ENCODE measurements at regions of chr17 and their contacts with region 1.

Region 1: DNA sequence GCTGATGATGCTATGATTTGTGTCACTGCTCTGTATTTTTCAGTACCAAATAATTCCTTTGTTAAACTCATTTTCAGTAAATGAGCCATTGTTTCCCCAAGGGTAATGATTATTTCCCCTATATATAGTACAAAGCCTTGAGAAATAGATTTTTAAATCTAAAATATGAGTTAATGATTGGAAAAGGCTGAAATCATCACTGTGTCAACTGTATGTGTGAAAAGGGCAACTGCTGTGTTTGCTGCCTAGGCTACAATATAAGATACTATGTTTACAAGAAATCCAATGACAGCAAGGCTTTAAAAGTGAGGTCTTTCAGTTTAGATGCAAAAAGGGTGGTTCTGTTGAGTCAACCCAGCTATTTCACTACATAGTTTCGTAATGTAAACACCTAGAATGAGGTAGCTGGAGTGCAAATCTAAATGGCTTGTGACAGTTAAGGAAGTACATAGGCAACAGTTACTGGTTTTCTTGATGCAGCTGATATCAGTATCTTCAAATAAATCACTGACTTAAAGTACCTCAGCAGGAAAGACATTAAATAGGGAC is 15.3 kb downstream of the NLK start:
- DNase-seq: no peak
- H3K4me3 Mint-ChIP-seq: no peak overlapping the region
- H3K27ac Mint-ChIP-seq: peak overlapping the region; percentile 54
- H3K4me1 Mint-ChIP-seq: peaks cover 36% of the 10 kb centered on the region
- H3K27me3 Mint-ChIP-seq: no peaks in the 10 kb centered on the region
- CTCF ChIP-seq: no peak

Region 2: DNA sequence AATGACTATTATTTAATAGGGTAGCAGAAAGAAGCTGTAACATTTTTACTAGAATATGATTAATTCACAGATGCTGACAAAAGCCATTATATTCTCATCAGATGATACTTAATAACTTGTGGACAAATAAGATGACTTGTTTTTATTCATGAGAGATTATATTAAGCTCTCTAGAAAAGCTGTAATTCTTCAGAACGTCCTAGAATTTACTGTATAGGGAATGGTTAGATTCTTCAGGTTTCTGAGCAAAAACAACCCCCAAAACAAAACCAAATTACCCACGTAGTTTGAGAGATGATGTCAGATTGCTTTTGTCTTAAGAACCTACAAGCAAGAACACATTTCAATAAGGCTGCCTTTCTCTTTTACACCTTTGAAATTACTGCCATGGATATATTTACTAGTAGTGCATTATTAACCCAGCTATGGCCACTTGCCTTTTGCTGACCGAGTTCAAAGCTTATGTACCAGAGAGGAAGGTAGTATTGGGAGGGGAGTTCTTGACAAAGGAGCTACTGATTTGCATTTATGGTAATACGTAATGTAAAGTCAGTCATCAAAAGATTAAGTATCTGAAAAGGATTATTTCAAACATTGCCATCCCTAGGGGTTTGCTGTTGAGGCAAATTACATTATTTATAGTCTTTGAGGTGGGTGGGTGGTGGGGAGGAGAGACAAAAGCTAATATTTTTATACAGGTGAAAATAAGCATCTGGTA is 36.4 kb after region 1 on chr17:
- CTCF ChIA-PET with region 1: no interaction called
- intact Hi-C with region 1: no loop called
- DNase-seq: no peak
- H3K4me3 Mint-ChIP-seq: no peak overlapping the region
- H3K27ac Mint-ChIP-seq: no peak overlapping the region
- H3K4me1 Mint-ChIP-seq: peaks cover 6% of the 10 kb centered on the region
- H3K27me3 Mint-ChIP-seq: no peaks in the 10 kb centered on the region
- CTCF ChIP-seq: no peak

Region 3: GRCh38 chr17:28105501-28105900 is 47.7 kb after region 1 on chr17:
- CTCF ChIA-PET with region 1: no interaction called
- intact Hi-C with region 1: loop called (anchors 5 kb)
- DNase-seq: no peak
- H3K4me3 Mint-ChIP-seq: no peak overlapping the region
- H3K27ac Mint-ChIP-seq: no peak overlapping the region
- H3K4me1 Mint-ChIP-seq: peaks cover 4% of the 10 kb centered on the region
- H3K27me3 Mint-ChIP-seq: no peaks in the 10 kb centered on the region
- CTCF ChIP-seq: no peak

Region 4: GRCh38 chr17:28125530-28126378 is 67.9 kb after region 1 on chr17:
- CTCF ChIA-PET with region 1: interaction called, 3 read pairs
- intact Hi-C with region 1: loop called (anchors 5 kb)
- DNase-seq: no peak
- H3K4me3 Mint-ChIP-seq: no peak overlapping the region
- H3K27ac Mint-ChIP-seq: peak overlapping the region; percentile 57
- H3K4me1 Mint-ChIP-seq: peaks cover 35% of the 10 kb centered on the region
- H3K27me3 Mint-ChIP-seq: no peaks in the 10 kb centered on the region
- CTCF ChIP-seq: no peak

Region 5: GRCh38 chr17:28136923-28137322 is 79.1 kb after region 1 on chr17:
- CTCF ChIA-PET with region 1: no interaction called
- intact Hi-C with region 1: no loop called
- DNase-seq: no peak
- H3K4me3 Mint-ChIP-seq: no peak overlapping the region
- H3K27ac Mint-ChIP-seq: no peak overlapping the region
- H3K4me1 Mint-ChIP-seq: peaks cover 11% of the 10 kb centered on the region
- H3K27me3 Mint-ChIP-seq: no peaks in the 10 kb centered on the region
- CTCF ChIP-seq: no peak

Region 6: GRCh38 chr17:28178800-28179199 is 121.0 kb after region 1 on chr17:
- CTCF ChIA-PET with region 1: no interaction called
- intact Hi-C with region 1: loop called (anchors 5 kb)
- DNase-seq: no peak
- H3K4me3 Mint-ChIP-seq: no peak overlapping the region
- H3K27ac Mint-ChIP-seq: no peak overlapping the region
- H3K4me1 Mint-ChIP-seq: no peaks in the 10 kb centered on the region
- H3K27me3 Mint-ChIP-seq: no peaks in the 10 kb centered on the region
- CTCF ChIP-seq: no peak

Region 7: DNA sequence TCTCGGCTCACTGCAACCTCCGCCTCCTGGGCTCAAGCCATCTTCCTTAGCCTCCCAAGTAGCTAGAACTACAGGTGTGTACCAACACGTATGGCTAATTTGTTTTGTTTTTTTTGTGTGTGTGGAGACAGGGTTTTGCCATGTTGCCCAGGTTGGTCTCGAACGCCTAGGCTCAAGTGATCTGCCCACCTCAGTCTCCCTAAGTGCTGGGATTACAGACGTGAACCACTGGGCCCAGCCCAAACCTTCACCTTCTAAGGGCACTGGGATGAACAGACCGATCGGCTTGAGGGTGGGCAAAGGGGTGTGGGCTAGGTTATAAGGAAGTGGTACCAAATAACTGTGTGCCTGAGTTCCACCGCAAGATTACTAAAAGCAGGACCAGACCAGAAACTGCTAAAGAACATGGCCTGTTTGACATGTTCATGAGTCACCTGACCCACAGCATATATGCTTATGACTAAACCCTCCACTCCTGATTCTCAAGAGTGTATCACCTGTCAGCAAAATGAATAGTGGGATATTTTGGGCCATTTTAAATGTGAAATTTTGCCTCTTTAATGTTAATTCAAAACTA is 269.3 kb after region 1 on chr17:
- CTCF ChIA-PET with region 1: interaction called, 3 read pairs
- intact Hi-C with region 1: loop called (anchors 10 kb)
- DNase-seq: no peak
- H3K4me3 Mint-ChIP-seq: peak overlapping the region; percentile 43
- H3K27ac Mint-ChIP-seq: no peak overlapping the region
- H3K4me1 Mint-ChIP-seq: peaks cover 41% of the 10 kb centered on the region
- H3K27me3 Mint-ChIP-seq: no peaks in the 10 kb centered on the region
- CTCF ChIP-seq: no peak

Measured in Calu3 (cell line).